PC-3 (cell line): ENCODE measurements at regions of chr14 and their contacts with region 1.

Region 1: GRCh38 chr14:58072288-58073071 is 79.5 kb downstream of the ARMH4 start:
- DNase-seq: peak; percentile 95
- ATAC-seq: peak; percentile 90
- H3K4me3 ChIP-seq: peak overlapping the region; percentile 18; the same call in 1 of the 2 replicates
- H3K27ac ChIP-seq: no peak overlapping the region
- H3K4me1 ChIP-seq: no peaks in the 10 kb centered on the region
- H3K27me3 ChIP-seq: peaks cover 20% of the 10 kb centered on the region; the same call in 1 of the 2 replicates
- CTCF ChIP-seq: peak; percentile 97

Region 2: GRCh38 chr14:57390028-57390805 is 682.3 kb before region 1 on chr14 and contains the start of gene NAA30:
- CTCF ChIA-PET with region 1: no interaction called
- POLR2A ChIA-PET with region 1: no interaction called
- intact Hi-C with region 1: loop called (anchors 5 kb)
- DNase-seq: peak; percentile 100
- ATAC-seq: peak; percentile 83
- H3K4me3 ChIP-seq: peak within 1 kb of the TSS; percentile 77
- H3K27ac ChIP-seq: peak within 1 kb of the TSS; percentile 68
- H3K4me1 ChIP-seq: peaks cover 31% of the 10 kb centered on the region
- H3K27me3 ChIP-seq: no peaks in the 10 kb centered on the region
- CTCF ChIP-seq: no peak; the same call in 1 of the 2 replicates
- total RNA-seq, gene NAA30: 23.2 and 31.2 TPM in 2 replicates

Region 3: DNA sequence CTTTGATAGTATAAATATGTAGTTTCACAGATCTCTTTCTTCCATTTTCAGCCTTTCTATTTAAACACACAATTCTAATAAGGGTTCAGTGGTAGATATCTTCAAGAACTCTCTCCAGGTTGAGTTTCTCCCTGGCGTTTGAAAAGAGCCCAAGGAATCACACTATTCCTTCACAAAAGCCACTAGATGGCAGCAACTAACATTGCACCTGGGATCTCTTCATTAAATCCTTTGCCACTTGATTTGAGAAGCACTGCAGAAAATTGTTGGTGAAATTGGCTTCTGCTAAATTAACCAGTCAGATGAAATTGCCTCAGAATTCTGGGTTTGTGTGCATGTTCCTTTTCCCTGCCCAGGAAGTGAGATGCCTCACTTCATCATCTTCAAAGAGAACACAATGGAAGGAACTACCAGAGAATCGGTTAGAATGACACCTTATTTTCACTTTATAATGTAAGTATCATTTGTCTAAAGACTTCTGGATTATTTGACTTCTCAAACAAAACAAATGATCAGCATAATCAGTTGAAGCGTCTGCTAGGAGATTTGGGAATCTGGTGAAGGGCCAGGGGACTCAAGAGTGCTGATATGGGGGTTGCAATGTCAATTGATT is 585.6 kb before region 1 on chr14:
- CTCF ChIA-PET with region 1: no interaction called
- POLR2A ChIA-PET with region 1: no interaction called
- intact Hi-C with region 1: loop called (anchors 1 kb)
- DNase-seq: peak; percentile 86
- ATAC-seq: peak; percentile 89
- H3K4me3 ChIP-seq: no peak overlapping the region
- H3K27ac ChIP-seq: no peak overlapping the region
- H3K4me1 ChIP-seq: no peaks in the 10 kb centered on the region
- H3K27me3 ChIP-seq: peaks cover 54% of the 10 kb centered on the region
- CTCF ChIP-seq: peak; percentile 99

Region 4: GRCh38 chr14:57533214-57533613 is 539.3 kb before region 1 on chr14:
- CTCF ChIA-PET with region 1: no interaction called
- POLR2A ChIA-PET with region 1: no interaction called
- intact Hi-C with region 1: loop called (anchors 5 kb)
- DNase-seq: peak; percentile 83
- ATAC-seq: peak; percentile 70
- H3K4me3 ChIP-seq: no peak overlapping the region
- H3K27ac ChIP-seq: no peak overlapping the region
- H3K4me1 ChIP-seq: no peaks in the 10 kb centered on the region
- H3K27me3 ChIP-seq: peaks cover 28% of the 10 kb centered on the region
- CTCF ChIP-seq: peak; percentile 96

Region 5: GRCh38 chr14:57692671-57693070 is 379.8 kb before region 1 on chr14:
- CTCF ChIA-PET with region 1: interaction called, 3 read pairs
- POLR2A ChIA-PET with region 1: no interaction called
- intact Hi-C with region 1: loop called (anchors 1 kb)
- DNase-seq: peak; percentile 94
- ATAC-seq: peak; percentile 98
- H3K4me3 ChIP-seq: no peak overlapping the region
- H3K27ac ChIP-seq: no peak overlapping the region
- H3K4me1 ChIP-seq: no peaks in the 10 kb centered on the region
- H3K27me3 ChIP-seq: peaks cover 24% of the 10 kb centered on the region
- CTCF ChIP-seq: peak; percentile 99

Region 6: GRCh38 chr14:57884175-57884574 is 188.3 kb before region 1 on chr14:
- CTCF ChIA-PET with region 1: no interaction called
- POLR2A ChIA-PET with region 1: no interaction called
- intact Hi-C with region 1: loop called (anchors 5 kb)
- DNase-seq: peak; percentile 61
- ATAC-seq: peak; percentile 50; the same call in 1 of the 2 replicates
- H3K4me3 ChIP-seq: no peak overlapping the region
- H3K27ac ChIP-seq: no peak overlapping the region
- H3K4me1 ChIP-seq: no peaks in the 10 kb centered on the region
- H3K27me3 ChIP-seq: peaks cover 72% of the 10 kb centered on the region
- CTCF ChIP-seq: peak; percentile 86

Region 7: GRCh38 chr14:58060077-58060476 is 12.4 kb before region 1 on chr14:
- CTCF ChIA-PET with region 1: no interaction called
- POLR2A ChIA-PET with region 1: no interaction called
- intact Hi-C with region 1: no loop called
- DNase-seq: peak; percentile 36
- ATAC-seq: no peak
- H3K4me3 ChIP-seq: no peak overlapping the region
- H3K27ac ChIP-seq: no peak overlapping the region
- H3K4me1 ChIP-seq: no peaks in the 10 kb centered on the region
- H3K27me3 ChIP-seq: peaks cover 87% of the 10 kb centered on the region
- CTCF ChIP-seq: no peak

Region 8: GRCh38 chr14:58091883-58092630 is 19.6 kb after region 1 on chr14:
- CTCF ChIA-PET with region 1: no interaction called
- POLR2A ChIA-PET with region 1: interaction called, 3 read pairs
- intact Hi-C with region 1: loop called (anchors 1 kb)
- DNase-seq: peak; percentile 92
- ATAC-seq: peak; percentile 89
- H3K4me3 ChIP-seq: no peak overlapping the region
- H3K27ac ChIP-seq: peak overlapping the region; percentile 49
- H3K4me1 ChIP-seq: peaks cover 14% of the 10 kb centered on the region
- H3K27me3 ChIP-seq: peaks cover 15% of the 10 kb centered on the region; the same call in 1 of the 2 replicates
- CTCF ChIP-seq: no peak

Region 9: DNA sequence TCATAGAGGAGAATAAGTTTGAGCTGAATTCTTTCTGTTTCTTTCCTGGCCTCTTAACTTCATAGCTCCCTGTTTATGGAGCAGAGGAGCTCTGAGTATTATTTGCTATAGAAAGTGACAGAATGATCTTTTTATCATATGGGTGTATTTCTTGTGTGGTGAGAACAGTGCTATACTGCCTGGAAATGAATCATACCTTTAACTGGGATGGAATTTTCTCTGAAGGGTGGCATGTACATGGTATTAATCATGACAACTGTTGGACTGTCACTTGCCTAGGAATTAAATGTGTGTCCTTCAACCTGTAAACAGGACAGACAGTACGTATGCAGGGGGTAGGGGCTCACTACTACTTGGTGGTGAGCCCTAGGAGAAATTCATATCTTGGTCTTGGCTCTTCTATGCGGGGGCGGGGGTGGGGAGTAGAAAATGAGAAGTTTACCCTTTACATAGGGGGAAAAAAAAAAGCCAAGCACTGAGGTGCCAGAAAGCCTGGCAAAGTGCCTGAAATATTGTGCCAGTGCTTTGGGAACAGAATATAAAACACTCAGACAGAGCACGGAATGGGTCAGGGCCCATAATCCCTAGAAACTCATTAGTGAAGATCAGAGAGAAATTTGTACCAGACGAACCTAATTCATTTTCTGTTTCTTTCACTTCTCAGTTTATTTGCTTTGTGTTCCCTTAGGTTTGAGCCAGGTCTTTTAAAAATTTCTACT is 45.8 kb after region 1 on chr14:
- CTCF ChIA-PET with region 1: no interaction called
- POLR2A ChIA-PET with region 1: no interaction called
- intact Hi-C with region 1: no loop called
- DNase-seq: peak; percentile 77
- ATAC-seq: peak; percentile 85
- H3K4me3 ChIP-seq: no peak overlapping the region
- H3K27ac ChIP-seq: no peak overlapping the region
- H3K4me1 ChIP-seq: peaks cover 23% of the 10 kb centered on the region
- H3K27me3 ChIP-seq: peaks cover 9% of the 10 kb centered on the region; the same call in 1 of the 2 replicates
- CTCF ChIP-seq: no peak